ENCODE measurements at regions of chr6 and their contacts with region 1.

Region 1: GRCh38 chr6:41787219-41787917 is at the start of gene TOMM6:
- DNase-seq: peak; percentile 95 to 96
- ATAC-seq: peak; percentile 83 to 95 (median 90)
- H3K4me3 ChIP-seq: peak within 1 kb of the TSS; percentile 54 to 96 (median 80)
- H3K27ac ChIP-seq: peak within 1 kb of the TSS; percentile 82 to 97 (median 94)
- H3K4me1 ChIP-seq: peaks cover 12 to 70% (median 46%) of the 10 kb centered on the region in 9 donors
- H3K27me3 ChIP-seq: no peaks in the 10 kb centered on the region
- CTCF ChIP-seq: peak; percentile 84 to 94 (median 91)
- total RNA-seq, gene TOMM6: 156 to 210 (median 186) TPM

Region 2: DNA sequence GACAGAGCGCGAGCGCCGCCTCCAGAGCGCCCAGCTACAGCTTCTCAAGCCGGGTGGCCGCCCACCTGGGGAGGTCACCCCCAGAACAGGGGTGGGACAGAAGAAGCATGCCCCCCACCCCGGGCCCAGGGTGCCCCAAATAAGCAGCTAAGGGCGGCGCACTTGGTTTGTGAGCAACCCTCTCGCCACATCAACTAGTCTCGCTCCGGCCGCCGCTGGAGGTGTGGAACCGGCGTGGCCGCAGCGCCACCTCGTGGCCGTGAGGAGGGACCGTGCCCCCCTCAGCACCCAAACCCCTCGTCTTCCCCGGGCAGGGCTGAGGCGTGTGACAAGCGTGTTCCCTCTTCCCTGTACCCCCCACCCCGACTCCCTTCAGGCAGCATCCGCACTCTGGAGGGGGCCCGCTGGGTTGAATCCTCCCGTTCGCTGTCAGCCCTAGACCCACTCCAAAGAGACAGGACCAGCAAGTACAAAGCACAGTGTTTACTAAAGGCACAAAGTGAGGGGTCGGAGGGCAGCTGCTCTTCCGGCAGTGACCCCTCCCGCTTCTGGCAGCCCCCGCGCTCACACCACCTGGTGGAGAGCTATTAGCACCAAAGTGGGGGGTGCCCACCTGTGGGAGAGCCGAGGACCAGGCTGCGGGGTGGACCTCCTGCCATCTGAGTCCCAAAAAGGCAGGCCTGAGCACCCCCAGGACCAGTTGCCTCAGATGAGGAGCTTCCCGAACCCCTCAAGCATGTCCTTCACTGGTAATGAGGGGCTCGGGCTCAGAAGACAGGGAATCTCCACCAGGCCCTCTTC is 103.7 kb before region 1 on chr6:
- intact Hi-C with region 1: loop called in 2 of 10 experiments (anchors 10 kb)
- DNase-seq: peak; percentile 81 to 86
- ATAC-seq: peak; percentile 81 to 89 (median 85)
- H3K4me3 ChIP-seq: peak overlapping the region; percentile 15 to 68 (median 54)
- H3K27ac ChIP-seq: peak overlapping the region; percentile 53 to 97 (median 86)
- H3K4me1 ChIP-seq: peaks cover 5 to 37% (median 23%) of the 10 kb centered on the region in 9 donors
- H3K27me3 ChIP-seq: no peaks in the 10 kb centered on the region
- CTCF ChIP-seq: peak; percentile 88 to 97 (median 96)

Region 3: DNA sequence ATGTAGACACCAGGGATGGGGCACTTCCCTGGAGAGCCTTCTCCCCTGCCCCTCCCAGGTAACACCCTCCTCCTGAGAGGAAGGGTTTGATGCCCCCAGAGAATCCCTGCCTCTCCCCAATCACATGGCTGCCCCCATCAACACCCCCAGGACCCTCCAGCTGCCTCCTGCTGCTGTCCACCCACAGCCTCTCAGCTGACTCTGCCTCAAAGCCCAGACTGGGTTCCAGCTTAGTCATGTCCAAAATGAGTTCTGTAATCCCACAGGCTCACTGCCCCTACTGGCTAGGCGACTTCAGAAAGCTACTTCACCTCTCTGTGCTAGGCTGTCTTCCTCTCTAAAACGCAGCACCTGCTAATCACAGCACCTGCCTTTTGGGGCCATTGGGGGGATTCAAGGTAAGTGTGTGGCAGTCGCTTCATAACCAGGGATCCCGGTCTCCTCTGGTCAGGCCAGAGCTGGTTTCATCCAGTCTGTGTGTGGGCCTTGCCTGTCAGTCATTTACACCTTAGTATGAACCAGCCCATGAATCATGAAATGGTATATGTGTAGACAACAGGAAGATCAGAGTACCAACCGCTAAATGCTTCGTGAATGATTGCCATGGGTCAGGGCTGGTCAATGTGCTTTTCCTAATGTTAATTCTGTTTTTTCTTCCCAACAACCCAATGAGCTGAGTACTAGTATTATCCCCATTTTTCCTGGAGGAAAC is 92.4 kb before region 1 on chr6:
- intact Hi-C with region 1: no loop called
- DNase-seq: no peak
- ATAC-seq: no peak
- H3K4me3 ChIP-seq: no peak overlapping the region
- H3K27ac ChIP-seq: no peak overlapping the region
- H3K4me1 ChIP-seq: peaks cover 0 to 66% (median 38%) of the 10 kb centered on the region in 9 donors
- H3K27me3 ChIP-seq: no peaks in the 10 kb centered on the region
- CTCF ChIP-seq: no peak

Region 4: DNA sequence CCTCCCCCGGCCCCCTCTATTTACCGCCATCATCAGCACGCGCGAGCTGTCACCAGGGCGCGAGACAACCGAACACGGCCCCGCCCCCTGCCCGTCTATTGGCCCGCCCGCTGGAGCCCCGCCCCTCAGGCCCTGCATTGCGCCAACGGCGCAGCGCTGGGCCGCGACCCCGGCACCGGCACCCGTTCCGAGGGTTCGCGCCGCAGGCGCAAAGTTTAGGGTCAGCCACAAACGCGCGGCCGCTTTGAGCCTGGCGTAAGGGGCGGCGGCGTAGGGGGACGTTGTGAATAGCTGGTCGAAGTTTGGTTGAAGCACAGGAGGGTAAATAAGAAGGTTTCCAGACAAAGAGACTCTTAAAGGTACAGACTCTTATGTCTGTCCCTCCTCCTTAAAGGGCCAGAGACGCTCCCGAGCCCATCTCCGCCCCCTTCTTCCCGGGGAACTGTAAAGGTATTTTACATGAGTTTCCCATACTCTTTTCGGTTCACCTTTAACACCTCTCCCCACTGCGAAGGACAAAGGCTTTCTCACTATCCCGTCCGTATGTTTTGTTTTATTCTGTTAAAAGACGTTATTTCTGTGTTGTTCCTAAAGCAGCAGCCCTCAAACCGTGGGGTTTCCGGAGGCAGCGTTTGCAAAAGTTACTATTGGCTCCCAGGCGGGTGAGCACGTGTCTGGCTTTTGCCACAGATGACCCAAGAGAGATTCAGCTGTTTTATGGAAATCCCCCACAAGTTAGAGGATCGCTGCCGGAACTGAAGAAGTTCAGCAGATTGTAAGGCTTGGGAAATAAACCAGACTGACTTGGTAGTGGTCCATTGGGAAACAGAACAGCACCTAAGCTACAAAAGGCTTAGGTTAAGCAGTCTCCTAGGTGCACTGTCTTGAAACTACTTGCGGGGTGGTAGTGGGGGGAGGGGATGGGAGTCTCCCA is 108.2 kb after region 1 on chr6 and contains the start of gene USP49:
- intact Hi-C with region 1: loop called in 4 of 10 experiments (anchors 10 kb)
- DNase-seq: peak; percentile 88 to 89
- ATAC-seq: peak; percentile 98 to 99 (median 98)
- H3K4me3 ChIP-seq: peak within 1 kb of the TSS; percentile 50 to 88 (median 72)
- H3K27ac ChIP-seq: peak within 1 kb of the TSS in 9 of 10 donors; percentile 53 to 94 (median 68)
- H3K4me1 ChIP-seq: peaks cover 0 to 34% (median 24%) of the 10 kb centered on the region in 9 donors
- H3K27me3 ChIP-seq: no peaks in the 10 kb centered on the region
- CTCF ChIP-seq: no peak
- total RNA-seq, gene USP49: 1.1 to 2.0 (median 1.7) TPM

Region 5: DNA sequence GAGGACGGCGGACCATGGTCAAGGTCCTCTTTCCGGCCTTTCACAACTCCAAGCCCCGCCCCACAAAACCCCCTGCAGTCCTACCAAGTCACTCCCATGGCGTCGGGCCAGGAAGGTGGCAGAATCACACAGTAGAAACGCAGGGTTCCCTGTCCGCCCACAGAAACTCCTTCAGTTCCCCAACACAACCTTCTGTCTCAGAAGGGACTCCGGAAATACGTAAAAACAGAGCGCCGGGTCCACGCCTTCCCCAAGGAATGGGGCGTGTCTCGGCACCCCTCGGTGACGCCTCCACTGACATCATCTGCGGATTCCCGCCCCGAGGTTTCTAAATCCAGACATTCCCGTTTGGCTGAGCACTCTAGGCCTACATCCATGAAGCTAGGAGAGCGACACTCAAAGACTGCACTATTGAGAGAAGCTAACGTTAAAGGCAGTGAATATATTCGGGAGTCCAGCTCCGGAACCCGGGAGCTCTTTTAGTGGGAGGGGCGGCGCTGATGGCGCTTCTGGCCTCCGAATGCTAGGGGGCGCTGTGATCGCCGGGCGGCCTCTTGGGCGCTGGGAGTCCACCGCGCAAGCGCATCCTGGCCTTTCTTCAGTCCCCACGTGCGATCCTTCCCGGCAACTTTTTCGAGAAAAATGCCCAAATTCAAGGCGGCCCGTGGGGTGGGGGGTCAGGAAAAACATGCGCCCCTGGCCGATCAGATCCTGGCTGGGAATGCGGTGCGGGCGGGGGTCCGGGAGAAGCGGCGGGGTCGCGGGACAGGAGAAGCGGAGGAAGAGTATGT is 133.7 kb after region 1 on chr6 and contains the starts of genes BYSL and MED20:
- intact Hi-C with region 1: loop called in 7 of 10 experiments (anchors 1 to 5 kb)
- DNase-seq: peak; percentile 93 to 96
- ATAC-seq: peak; percentile 98 to 99 (median 98)
- H3K4me3 ChIP-seq: peak within 1 kb of the TSS; percentile 57 to 91 (median 76)
- H3K27ac ChIP-seq: peak within 1 kb of the TSS; percentile 92 to 99 (median 98)
- H3K4me1 ChIP-seq: peaks cover 0 to 50% (median 33%) of the 10 kb centered on the region in 9 donors
- H3K27me3 ChIP-seq: no peaks in the 10 kb centered on the region
- CTCF ChIP-seq: peak; percentile 97 to 100 (median 99)
- total RNA-seq, gene BYSL: 7.5 to 14.6 (median 9.9) TPM
- total RNA-seq, gene MED20: 12.6 to 21.5 (median 17.3) TPM

Region 6: DNA sequence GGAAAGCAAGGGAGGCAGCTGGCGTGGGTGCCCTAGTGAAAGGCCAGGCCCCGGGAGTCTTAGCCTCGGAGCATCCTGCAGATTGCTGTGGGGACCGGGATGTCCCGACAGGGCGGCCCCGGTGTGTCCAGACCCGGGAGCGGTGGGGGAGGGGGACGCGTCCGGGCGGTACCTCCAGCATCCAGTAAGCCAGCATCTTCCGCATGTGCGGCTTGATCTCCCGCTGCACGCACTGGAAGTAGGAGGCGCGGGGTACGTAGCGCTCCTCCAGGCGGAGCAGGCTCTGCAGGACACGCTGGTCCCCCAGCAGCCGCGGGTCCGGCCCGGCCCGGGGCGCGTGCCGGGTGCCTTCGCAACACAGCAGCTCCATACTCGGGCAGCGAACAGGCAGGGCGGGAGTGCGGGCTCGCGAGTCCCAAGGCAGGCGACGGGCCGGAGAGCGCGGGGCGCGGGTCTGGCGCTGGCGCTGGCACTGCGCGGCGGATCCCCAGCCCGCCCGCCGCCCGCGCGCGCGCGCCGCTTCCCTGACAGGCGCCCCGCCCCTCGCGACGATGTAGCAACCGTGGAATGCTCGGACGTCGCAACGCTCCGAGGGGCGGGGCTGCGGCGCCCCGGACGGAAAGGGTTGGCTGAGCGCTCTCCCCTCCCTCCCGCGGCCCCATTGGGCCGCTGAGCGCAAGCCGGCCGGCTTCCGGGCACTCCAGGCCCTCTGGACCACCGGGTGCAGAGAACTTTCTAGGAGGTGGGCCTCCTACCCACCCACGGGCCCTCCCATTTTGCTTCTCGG is 154.1 kb after region 1 on chr6 and contains the start of gene CCND3:
- intact Hi-C with region 1: loop called in 5 of 10 experiments (anchors 5 kb)
- DNase-seq: peak; percentile 93 to 95
- ATAC-seq: peak; percentile 91 to 95 (median 93)
- H3K4me3 ChIP-seq: peak within 1 kb of the TSS; percentile 57 to 99 (median 92)
- H3K27ac ChIP-seq: peak within 1 kb of the TSS; percentile 38 to 94 (median 88)
- H3K4me1 ChIP-seq: peaks cover 26 to 60% (median 49%) of the 10 kb centered on the region in 9 donors
- H3K27me3 ChIP-seq: no peaks in the 10 kb centered on the region
- CTCF ChIP-seq: peak in 2 of 9 donors; percentile 7 to 9
- total RNA-seq, gene CCND3: 29.6 to 51.8 (median 37.5) TPM